ENCODE measurements at regions of chr10 and their contacts with region 1.

Region 1: GRCh38 chr10:45672181-45673073 is at the start of gene ZFAND4:
- DNase-seq: peak; percentile 88 to 93 (median 91)
- ATAC-seq: peak; percentile 98
- H3K4me3 ChIP-seq: peak within 1 kb of the TSS; percentile 70
- H3K4me3 Mint-ChIP-seq: peak within 1 kb of the TSS; percentile 81 to 99 (median 94)
- H3K27ac ChIP-seq: peak within 1 kb of the TSS; percentile 79
- H3K27ac Mint-ChIP-seq: peak within 1 kb of the TSS; percentile 77 to 97 (median 93)
- H3K4me1 ChIP-seq: peaks cover 7 to 13% of the 10 kb centered on the region in 2 donors
- H3K4me1 Mint-ChIP-seq: peaks cover 23 to 54% (median 46%) of the 10 kb centered on the region in 7 donors
- H3K27me3 ChIP-seq: no peaks in the 10 kb centered on the region
- H3K27me3 Mint-ChIP-seq: peaks cover 0 to under 1% (median 0%) of the 10 kb centered on the region in 5 donors
- total RNA-seq, gene ZFAND4: 21.4 to 33.2 (median 29.5) TPM

Region 2: DNA sequence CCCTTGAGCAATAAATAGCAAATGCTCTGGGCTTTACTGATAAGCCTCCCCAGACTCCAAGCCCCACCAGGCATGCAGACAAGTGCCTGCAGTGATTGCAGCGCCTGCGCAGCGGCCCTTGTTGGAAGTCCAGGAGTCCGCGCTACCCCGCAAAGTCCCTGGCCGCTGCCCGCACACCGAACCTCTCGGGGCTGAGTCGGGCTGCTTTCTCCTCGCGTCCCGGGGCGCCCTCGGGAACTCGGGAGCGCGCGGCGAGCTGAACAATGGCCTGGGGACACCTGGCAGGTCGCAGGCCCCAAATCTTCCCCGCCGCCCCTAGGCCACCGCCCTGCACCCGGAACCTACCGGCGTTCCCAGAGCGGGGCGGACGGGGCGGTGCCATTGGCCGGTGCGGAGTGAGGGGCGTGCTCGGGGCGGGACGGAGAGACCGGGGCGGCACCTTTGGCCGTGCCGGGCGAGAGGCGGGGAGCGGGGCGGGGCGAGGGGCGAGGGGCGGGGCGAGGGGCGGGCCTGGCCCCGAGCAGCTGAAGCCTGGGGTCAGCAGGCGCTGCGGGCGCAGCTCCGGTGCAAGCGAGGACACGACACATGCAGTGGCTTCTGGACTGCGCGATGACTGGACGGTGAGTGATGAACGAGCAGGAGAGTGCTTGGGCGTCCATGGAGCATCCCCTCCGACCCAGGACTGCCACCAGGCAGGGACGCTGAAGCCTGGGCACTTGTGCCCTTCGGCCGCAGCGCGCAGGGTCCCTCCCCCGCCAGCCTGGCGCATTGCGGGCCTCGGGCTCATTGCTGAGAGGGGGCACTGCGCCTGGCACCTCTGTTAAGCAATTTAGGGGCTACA is 713.0 kb before region 1 on chr10 and contains the start of gene RASSF4:
- CTCF ChIA-PET with region 1: no interaction called
- POLR2A ChIA-PET with region 1: no interaction called
- intact Hi-C with region 1: loop called in 1 of 2 experiments (anchors 5 kb)
- DNase-seq: peak; percentile 83 to 95 (median 89)
- ATAC-seq: peak; percentile 99
- H3K4me3 ChIP-seq: peak within 1 kb of the TSS; percentile 79
- H3K4me3 Mint-ChIP-seq: peak within 1 kb of the TSS; percentile 81 to 93 (median 88)
- H3K27ac ChIP-seq: peak within 1 kb of the TSS; percentile 68
- H3K27ac Mint-ChIP-seq: peak within 1 kb of the TSS; percentile 65 to 87 (median 80)
- H3K4me1 ChIP-seq: peaks cover 7 to 13% of the 10 kb centered on the region in 2 donors
- H3K4me1 Mint-ChIP-seq: peaks cover 16 to 52% (median 37%) of the 10 kb centered on the region in 7 donors
- H3K27me3 ChIP-seq: no peaks in the 10 kb centered on the region
- H3K27me3 Mint-ChIP-seq: no peaks in the 10 kb centered on the region
- total RNA-seq, gene RASSF4: 1.9 to 53.4 (median 3.0) TPM

Region 3: GRCh38 chr10:45235798-45236231 is 436.6 kb before region 1 on chr10:
- CTCF ChIA-PET with region 1: no interaction called
- POLR2A ChIA-PET with region 1: no interaction called
- intact Hi-C with region 1: loop called in 1 of 2 experiments (anchors 5 kb)
- DNase-seq: no peak
- ATAC-seq: no peak
- H3K4me3 ChIP-seq: no peak overlapping the region
- H3K4me3 Mint-ChIP-seq: no peak overlapping the region
- H3K27ac ChIP-seq: no peak overlapping the region
- H3K27ac Mint-ChIP-seq: no peak overlapping the region
- H3K4me1 ChIP-seq: no peaks in the 10 kb centered on the region
- H3K4me1 Mint-ChIP-seq: peaks cover 0 to 17% (median 4%) of the 10 kb centered on the region in 7 donors
- H3K27me3 ChIP-seq: no peaks in the 10 kb centered on the region
- H3K27me3 Mint-ChIP-seq: peaks cover 5 to 10% (median 6%) of the 10 kb centered on the region in 5 donors

Region 4: GRCh38 chr10:45373576-45374349 is 298.7 kb before region 1 on chr10 and contains the start of gene ALOX5:
- CTCF ChIA-PET with region 1: no interaction called
- POLR2A ChIA-PET with region 1: no interaction called
- intact Hi-C with region 1: loop called in 1 of 2 experiments (anchors 10 kb)
- DNase-seq: peak in 5 of 9 donors; percentile 8 to 48 (median 19)
- ATAC-seq: peak; percentile 63
- H3K4me3 ChIP-seq: peak within 1 kb of the TSS; percentile 37
- H3K4me3 Mint-ChIP-seq: peak within 1 kb of the TSS; percentile 67 to 92 (median 86)
- H3K27ac ChIP-seq: no peak within 1 kb of the TSS
- H3K27ac Mint-ChIP-seq: peak within 1 kb of the TSS in 3 of 9 donors; percentile 45 to 87 (median 62)
- H3K4me1 ChIP-seq: peaks cover 0 to 6% of the 10 kb centered on the region in 2 donors
- H3K4me1 Mint-ChIP-seq: peaks cover 8 to 33% (median 21%) of the 10 kb centered on the region in 7 donors
- H3K27me3 ChIP-seq: peaks cover 0 to 10% of the 10 kb centered on the region in 2 donors
- H3K27me3 Mint-ChIP-seq: peaks cover 41 to 80% (median 44%) of the 10 kb centered on the region in 5 donors
- total RNA-seq, gene ALOX5: 1.2 to 143 (median 14.8) TPM

Region 5: DNA sequence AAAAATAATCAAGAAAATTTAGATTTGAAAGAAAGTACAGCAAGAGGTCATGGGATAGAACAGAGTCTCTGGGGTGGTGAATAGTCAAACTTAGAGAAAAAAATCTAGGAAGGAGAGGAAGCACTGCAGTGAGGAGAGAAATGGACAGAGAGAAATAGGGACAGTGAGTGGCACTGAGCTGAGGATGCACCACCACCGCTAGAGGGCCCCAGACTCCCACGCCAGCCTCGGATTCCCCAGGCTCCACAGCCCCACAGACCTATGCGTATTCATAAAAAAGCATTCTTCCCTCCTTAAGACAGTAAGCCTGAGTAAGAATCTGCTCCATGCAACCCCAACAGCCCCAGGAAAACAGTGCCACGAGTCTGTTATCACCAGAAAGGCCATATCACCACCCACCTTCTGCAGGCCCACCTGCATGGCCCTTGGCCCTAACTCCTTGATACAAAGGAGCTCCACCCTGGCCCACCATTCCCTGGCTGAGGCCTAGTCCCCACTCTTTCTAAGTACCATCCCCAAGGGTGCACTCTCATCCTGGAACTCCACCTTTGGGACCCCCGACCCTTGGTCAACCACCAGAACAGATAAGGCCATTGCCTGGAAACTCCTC is 207.4 kb before region 1 on chr10:
- CTCF ChIA-PET with region 1: interaction called, 8 read pairs
- POLR2A ChIA-PET with region 1: interaction called, 3 read pairs
- intact Hi-C with region 1: loop called (anchors 1 to 2 kb)
- DNase-seq: peak; percentile 54 to 81 (median 72)
- ATAC-seq: peak; percentile 95
- H3K4me3 ChIP-seq: no peak overlapping the region
- H3K4me3 Mint-ChIP-seq: no peak overlapping the region
- H3K27ac ChIP-seq: no peak overlapping the region
- H3K27ac Mint-ChIP-seq: peak overlapping the region in 5 of 9 donors; percentile 5 to 83 (median 32)
- H3K4me1 ChIP-seq: peaks cover under 1 to 6% of the 10 kb centered on the region in 2 donors
- H3K4me1 Mint-ChIP-seq: peaks cover 19 to 49% (median 29%) of the 10 kb centered on the region in 7 donors
- H3K27me3 ChIP-seq: no peaks in the 10 kb centered on the region
- H3K27me3 Mint-ChIP-seq: no peaks in the 10 kb centered on the region

Region 6: DNA sequence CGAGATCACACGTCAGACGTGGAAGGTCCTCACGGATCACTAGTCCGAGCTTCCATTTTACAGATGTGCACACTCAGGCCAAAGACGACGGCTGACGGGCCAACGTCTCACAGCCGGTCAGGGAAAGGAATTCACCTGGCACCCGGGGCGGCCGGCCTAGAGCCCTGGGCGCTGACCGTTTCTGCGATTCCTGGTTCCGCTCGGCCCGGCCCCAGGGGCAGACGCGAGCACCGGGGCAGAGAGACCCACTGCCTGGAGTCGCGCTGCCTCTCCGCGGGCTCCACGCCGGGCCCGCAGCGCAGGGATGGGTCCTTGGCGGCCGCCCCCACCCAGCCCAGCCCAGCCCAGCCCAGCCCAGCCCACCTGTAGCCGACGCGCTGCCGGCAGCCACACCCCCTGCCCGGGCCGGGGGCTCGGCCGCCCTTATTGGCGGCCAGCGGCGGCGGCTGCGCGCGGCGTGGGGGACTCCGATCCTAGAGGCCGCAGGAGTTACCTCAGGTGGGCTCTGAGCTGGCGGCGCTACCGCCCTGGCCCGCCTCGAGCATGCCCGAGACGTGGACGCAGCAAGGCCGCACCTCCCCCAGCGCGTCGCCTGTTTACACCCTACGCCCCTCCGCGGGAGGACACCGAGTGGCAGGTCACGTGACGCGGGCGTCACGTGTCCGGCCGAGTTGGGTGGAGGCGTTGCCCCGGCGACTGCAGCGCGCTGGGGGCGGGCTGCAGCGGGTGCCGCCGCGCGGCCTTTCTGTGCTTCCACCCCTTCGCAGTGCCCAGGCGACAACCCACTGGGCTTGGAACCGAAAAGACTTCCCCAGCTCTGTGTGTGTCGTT is 77.9 kb before region 1 on chr10:
- CTCF ChIA-PET with region 1: no interaction called
- POLR2A ChIA-PET with region 1: interaction called, 4 read pairs
- intact Hi-C with region 1: loop called (anchors 1 to 2 kb)
- DNase-seq: peak; percentile 83 to 94 (median 88)
- ATAC-seq: peak; percentile 95
- H3K4me3 ChIP-seq: peak overlapping the region; percentile 85
- H3K4me3 Mint-ChIP-seq: peak overlapping the region; percentile 86 to 96 (median 93)
- H3K27ac ChIP-seq: peak overlapping the region; percentile 79
- H3K27ac Mint-ChIP-seq: peak overlapping the region; percentile 72 to 97 (median 93)
- H3K4me1 ChIP-seq: peaks cover 11 to 20% of the 10 kb centered on the region in 2 donors
- H3K4me1 Mint-ChIP-seq: peaks cover 27 to 51% (median 40%) of the 10 kb centered on the region in 7 donors
- H3K27me3 ChIP-seq: no peaks in the 10 kb centered on the region
- H3K27me3 Mint-ChIP-seq: peaks cover 4 to 7% (median 7%) of the 10 kb centered on the region in 5 donors

Region 7: GRCh38 chr10:46030091-46030937 is 357.9 kb after region 1 on chr10 and contains the start of gene NCOA4:
- CTCF ChIA-PET with region 1: no interaction called
- POLR2A ChIA-PET with region 1: no interaction called
- intact Hi-C with region 1: loop called in 1 of 2 experiments (anchors 2 kb)
- DNase-seq: peak; percentile 88 to 96 (median 93)
- ATAC-seq: peak; percentile 98
- H3K4me3 ChIP-seq: peak within 1 kb of the TSS; percentile 70
- H3K4me3 Mint-ChIP-seq: peak within 1 kb of the TSS; percentile 89 to 100 (median 96)
- H3K27ac ChIP-seq: peak within 1 kb of the TSS; percentile 93
- H3K27ac Mint-ChIP-seq: peak within 1 kb of the TSS; percentile 89 to 99 (median 96)
- H3K4me1 ChIP-seq: peaks cover 27 to 42% of the 10 kb centered on the region in 2 donors
- H3K4me1 Mint-ChIP-seq: peaks cover 44 to 57% (median 55%) of the 10 kb centered on the region in 7 donors
- H3K27me3 ChIP-seq: no peaks in the 10 kb centered on the region
- H3K27me3 Mint-ChIP-seq: peaks cover 0 to 4% (median 0%) of the 10 kb centered on the region in 5 donors
- total RNA-seq, gene NCOA4: 54.6 to 126 (median 78.4) TPM

Measured in naive thymus-derived CD4-positive, alpha-beta T cell (primary cell).